ENCODE measurements at regions of chr11 and their contacts with region 1.

Region 1: GRCh38 chr11:44207292-44207691 is 102.6 kb downstream of the ALX4 start:
- DNase-seq: no peak
- H3K4me3 ChIP-seq: no peak overlapping the region
- H3K27ac ChIP-seq: no peak overlapping the region
- H3K4me1 ChIP-seq: no peaks in the 10 kb centered on the region
- CTCF ChIP-seq: no peak

Region 2: DNA sequence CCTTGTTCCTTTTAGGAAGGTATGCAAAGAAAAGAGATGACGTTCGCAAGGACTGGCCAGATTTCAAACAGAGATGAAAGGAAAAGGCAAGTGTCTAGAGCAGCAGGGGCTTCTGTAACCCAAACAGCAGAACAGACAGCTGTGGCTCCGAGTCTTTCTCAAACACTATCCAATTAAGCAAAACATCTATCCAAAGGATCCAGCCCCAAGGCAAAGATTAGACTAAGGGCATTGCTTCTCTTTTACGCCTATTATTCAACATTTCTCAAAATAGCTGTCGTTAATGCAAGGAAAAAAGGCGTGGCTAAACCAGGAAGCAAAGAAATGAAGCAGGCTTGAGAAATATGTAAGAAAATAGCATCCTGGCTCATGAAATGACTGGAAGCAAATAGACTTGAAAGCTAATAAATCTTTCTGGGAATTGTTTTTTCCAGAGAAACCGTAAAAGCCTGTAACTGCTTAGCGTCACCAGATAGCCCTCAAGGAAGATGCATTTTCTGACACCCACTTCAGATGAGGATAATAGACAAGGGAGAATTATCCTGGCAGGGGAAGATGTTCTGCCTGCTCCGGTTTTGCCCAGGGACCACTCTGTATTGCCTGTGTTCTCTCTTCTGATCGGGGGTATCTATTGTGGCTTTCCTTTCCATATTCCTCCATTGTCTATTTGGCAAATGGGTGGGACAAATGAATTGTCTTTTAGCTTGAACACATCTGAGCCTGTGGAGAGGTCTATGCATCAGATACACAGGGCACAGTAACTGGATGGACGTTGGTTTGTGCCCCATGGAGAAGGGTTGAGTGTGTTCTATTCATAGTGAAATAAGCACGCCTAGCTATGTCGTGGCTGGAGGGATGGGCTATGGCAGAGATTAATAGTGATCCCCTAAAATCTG is 244.7 kb before region 1 on chr11:
- CTCF ChIA-PET with region 1: no interaction called
- POLR2A ChIA-PET with region 1: no interaction called
- intact Hi-C with region 1: no loop called
- DNase-seq: no peak
- H3K4me3 ChIP-seq: no peak overlapping the region
- H3K27ac ChIP-seq: no peak overlapping the region
- H3K4me1 ChIP-seq: no peaks in the 10 kb centered on the region
- CTCF ChIP-seq: no peak

Region 3: DNA sequence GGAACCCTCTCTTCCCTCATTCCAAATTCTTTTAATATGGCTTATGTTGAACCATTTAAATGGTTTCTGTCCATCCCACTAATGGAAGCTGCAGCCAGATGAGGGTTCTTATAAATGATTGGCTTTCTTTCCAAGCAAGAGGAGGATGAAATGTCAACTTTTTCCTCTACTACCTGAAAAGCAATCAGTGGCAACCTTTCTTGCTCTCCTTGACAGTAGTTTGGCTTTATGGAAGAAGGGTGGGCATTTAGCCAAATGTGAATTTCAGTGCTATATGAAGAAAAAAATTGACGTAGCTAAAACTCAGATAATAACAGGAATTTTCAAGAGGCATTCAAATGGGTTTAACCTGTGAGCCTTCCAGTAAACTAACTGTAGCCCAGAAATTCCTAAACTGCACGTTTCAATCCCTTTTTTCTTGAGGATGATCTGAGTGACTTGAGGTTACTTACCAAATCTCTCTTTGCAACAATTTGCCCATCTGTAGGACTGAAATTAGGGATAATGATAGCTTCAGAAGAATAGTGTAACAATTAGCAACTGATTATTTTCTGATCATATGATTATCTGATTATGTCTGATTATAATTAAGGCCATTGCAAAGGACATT is 20.9 kb before region 1 on chr11:
- CTCF ChIA-PET with region 1: no interaction called
- POLR2A ChIA-PET with region 1: interaction called, 11 read pairs
- intact Hi-C with region 1: no loop called
- DNase-seq: no peak
- H3K4me3 ChIP-seq: no peak overlapping the region
- H3K27ac ChIP-seq: no peak overlapping the region
- H3K4me1 ChIP-seq: no peaks in the 10 kb centered on the region
- CTCF ChIP-seq: no peak

Measured in OCI-LY7 (cell line).